Activated CD8-positive, alpha-beta memory T cell treated with anti-CD3 and anti-CD28 coated beads, Interleukin-2, amount 10 ng/mL, durations not matched to agents 7 days and 5 days (primary cell): ENCODE measurements at regions of chr18 and their contacts with region 1.

Region 1: DNA sequence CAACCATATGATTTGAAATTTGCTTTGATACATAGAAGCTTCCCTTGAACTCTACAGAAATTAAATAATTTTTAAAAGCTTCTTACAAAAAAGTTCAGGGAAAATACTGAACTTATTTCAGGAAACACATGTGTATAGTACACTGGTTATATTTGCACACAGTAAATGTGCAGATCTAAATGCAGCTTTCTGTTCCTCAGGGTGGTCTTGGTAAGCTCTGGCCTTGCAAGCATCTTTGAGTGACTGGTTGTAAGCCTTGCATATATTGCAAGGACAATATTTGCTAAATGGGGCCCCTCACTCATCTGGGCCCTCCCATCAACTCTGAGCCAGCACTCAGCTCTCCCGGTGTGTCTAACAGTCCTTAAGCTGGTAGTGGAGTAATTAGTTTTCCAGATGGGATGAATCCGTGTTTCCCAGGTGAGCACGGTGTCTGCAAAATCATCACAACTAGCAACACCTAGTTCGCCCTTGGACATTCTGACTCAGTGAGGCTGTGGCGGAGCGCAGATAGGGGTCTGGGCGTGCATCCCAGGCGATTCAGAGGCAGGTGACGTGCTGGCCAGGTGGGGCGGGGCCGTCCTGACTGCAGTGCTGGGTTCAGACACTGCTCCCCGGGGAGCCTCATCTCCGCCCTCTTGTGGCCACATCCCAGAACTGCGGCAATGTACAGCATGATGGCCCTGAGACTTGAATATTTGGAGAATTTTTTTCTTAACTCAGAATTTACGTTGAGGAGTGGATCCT is 149.6 kb downstream of the MBP start:
- DNase-seq: peak; percentile 93
- ATAC-seq: peak; percentile 97
- H3K4me3 Mint-ChIP-seq: no peak overlapping the region
- H3K27ac Mint-ChIP-seq: no peak overlapping the region
- H3K4me1 Mint-ChIP-seq: peaks cover 6% of the 10 kb centered on the region
- H3K27me3 Mint-ChIP-seq: no peaks in the 10 kb centered on the region

Region 2: GRCh38 chr18:76476665-76477561 is 506.1 kb before region 1 on chr18:
- CTCF ChIA-PET with region 1: no interaction called
- DNase-seq: no peak
- ATAC-seq: no peak
- H3K4me3 Mint-ChIP-seq: no peak overlapping the region
- H3K27ac Mint-ChIP-seq: no peak overlapping the region
- H3K4me1 Mint-ChIP-seq: no peaks in the 10 kb centered on the region
- H3K27me3 Mint-ChIP-seq: peaks cover 39% of the 10 kb centered on the region

Region 3: DNA sequence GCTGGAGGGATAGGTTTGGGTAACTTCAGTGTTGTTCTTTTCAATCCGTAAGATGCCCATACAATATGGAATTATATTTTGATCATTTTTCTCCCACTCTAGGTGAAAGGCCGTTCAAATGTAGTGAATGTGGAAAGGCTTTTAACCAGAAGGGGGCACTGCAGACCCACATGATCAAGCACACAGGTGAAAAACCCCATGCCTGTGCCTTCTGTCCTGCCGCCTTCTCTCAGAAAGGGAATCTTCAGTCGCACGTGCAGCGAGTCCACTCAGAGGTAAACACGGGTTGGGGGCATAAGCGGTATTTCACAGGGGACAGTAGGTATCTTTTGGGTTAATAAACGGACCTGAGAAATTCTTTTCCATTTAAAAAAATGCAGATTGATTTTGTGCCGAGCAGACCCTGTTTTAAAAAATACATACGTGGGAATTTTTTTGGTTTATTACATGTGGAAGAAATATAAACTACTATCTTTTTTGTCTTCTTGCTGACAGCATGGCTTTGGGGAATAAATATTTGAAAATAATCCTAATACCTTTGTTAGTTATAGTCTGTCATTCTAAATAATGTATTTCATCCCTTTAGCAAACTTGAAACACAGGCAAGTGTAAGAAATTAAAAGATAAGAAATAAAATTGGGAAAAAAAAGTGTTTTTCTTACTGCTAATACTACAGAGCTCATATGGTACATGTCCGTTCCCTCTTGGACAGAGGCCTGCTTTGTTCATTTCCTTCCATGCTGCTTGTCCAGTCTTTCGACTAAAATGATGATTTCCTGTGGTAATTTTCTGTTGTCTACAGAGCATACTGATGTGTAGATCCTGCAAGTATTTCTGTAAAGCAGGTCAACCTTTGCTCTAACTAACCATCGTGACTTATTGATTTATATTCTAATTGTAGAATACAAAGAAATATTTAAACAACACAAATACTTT is 107.4 kb before region 1 on chr18:
- CTCF ChIA-PET with region 1: interaction called, 13 read pairs
- DNase-seq: peak; percentile 63
- ATAC-seq: peak; percentile 52
- H3K4me3 Mint-ChIP-seq: no peak overlapping the region
- H3K27ac Mint-ChIP-seq: no peak overlapping the region
- H3K4me1 Mint-ChIP-seq: peaks cover 14% of the 10 kb centered on the region
- H3K27me3 Mint-ChIP-seq: no peaks in the 10 kb centered on the region

Region 4: DNA sequence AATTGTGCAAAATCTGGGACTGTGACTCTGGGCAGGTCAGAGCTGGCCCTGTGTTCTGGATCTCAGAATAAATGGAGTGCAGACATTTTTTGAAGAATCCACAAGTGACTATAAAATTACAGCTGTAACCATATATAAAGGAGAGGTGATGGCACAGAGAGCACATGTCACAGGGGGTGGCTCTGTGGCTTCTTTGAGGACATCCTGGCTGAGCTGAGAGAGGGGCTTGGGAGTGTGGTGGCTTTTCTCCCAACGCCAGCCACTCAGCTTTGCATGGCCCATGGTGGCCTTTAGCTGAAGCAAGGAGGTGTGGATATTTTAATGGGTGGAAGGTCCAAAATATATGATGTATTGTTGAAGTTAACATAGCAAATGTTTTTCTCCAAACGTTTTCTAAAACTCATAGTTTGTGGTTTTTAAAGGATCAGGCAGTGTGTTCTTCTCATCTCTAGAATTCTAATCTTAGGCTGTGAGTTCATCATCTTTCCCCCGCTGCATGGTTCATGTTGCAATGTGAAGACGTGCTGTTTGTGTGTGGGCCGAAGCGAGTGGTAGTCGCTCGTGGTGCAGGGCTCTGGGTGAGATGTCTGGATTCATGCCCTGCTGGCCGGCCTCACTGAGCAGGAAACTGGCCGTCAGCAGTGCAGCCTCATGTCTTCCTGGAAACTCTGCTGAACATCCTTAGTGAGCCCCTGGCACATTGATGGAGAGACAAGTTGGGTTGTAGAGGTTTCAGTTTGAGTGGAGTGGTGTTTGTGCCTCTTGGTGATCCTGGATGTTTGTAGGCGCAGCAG is 50.8 kb before region 1 on chr18:
- CTCF ChIA-PET with region 1: interaction called, 16 read pairs
- DNase-seq: no peak
- ATAC-seq: peak; percentile 64
- H3K4me3 Mint-ChIP-seq: no peak overlapping the region
- H3K27ac Mint-ChIP-seq: peak overlapping the region; percentile 65
- H3K4me1 Mint-ChIP-seq: peaks cover 25% of the 10 kb centered on the region
- H3K27me3 Mint-ChIP-seq: no peaks in the 10 kb centered on the region

Region 5: GRCh38 chr18:76994086-76994654 is 11.2 kb after region 1 on chr18:
- CTCF ChIA-PET with region 1: interaction called, 24 read pairs
- DNase-seq: no peak
- ATAC-seq: no peak
- H3K4me3 Mint-ChIP-seq: no peak overlapping the region
- H3K27ac Mint-ChIP-seq: no peak overlapping the region
- H3K4me1 Mint-ChIP-seq: peaks cover 4% of the 10 kb centered on the region
- H3K27me3 Mint-ChIP-seq: no peaks in the 10 kb centered on the region

Region 6: DNA sequence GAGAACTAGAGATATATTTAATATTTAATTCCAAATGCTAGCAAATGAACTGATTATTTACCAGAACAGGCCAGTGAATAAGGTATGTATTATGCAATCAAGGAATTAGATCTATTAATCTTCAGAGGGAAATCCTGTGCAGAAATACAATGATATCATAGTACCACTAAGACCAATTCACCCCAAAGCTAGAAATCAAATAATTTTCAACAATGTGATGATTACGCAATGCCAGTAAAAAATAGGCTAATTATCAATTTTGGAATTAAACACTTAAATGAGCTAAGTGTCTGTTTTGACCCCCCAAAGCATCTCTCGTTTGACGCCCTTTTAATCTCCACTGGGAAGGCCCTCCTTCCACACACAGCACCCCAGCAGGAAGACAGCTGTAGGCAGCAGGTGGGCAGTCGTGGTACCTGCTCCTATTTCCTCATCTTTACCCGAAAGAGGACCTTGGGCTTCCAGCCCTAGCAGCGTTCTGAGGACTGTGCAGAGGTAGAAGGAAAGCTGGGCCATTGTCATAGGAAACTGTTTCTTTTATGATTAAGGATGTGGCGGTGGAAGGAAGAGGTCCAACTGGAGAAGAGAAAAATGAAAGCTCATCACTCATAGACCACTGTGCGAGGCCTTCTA is 64.9 kb after region 1 on chr18:
- CTCF ChIA-PET with region 1: no interaction called
- DNase-seq: no peak
- ATAC-seq: no peak
- H3K4me3 Mint-ChIP-seq: no peak overlapping the region
- H3K27ac Mint-ChIP-seq: no peak overlapping the region
- H3K4me1 Mint-ChIP-seq: peaks cover 15% of the 10 kb centered on the region
- H3K27me3 Mint-ChIP-seq: no peaks in the 10 kb centered on the region

Region 7: GRCh38 chr18:77207540-77207939 is 224.5 kb after region 1 on chr18:
- CTCF ChIA-PET with region 1: interaction called, 10 read pairs
- DNase-seq: peak; percentile 56
- ATAC-seq: peak; percentile 50
- H3K4me3 Mint-ChIP-seq: no peak overlapping the region
- H3K27ac Mint-ChIP-seq: no peak overlapping the region
- H3K4me1 Mint-ChIP-seq: peaks cover 47% of the 10 kb centered on the region
- H3K27me3 Mint-ChIP-seq: no peaks in the 10 kb centered on the region

Region 8: DNA sequence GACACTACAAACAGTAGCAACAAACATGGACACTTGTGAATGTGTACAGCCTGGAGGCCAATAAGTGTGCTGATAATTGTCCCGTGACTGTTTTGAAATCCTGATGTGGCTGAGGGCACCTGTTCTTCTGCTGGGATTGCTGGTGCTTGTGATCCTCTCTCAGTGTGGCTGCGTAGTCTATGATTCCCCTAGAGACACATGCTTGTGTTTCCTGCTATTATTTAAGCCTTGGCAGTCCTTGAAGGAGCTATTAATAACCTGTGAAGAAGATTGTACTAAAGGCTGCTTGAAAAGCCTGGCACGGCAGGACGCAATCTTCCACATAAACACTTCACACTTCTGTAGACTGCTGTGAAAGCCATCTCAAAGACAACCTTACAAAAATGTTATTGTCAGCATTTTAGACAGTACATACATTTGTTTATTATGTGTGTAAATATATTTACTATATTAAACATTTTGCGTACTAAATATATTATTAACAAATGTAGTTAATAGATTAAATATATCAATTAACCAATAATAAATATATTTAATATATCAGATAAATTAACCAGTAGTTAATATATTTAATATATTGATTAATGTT is 338.1 kb after region 1 on chr18:
- CTCF ChIA-PET with region 1: no interaction called
- DNase-seq: no peak
- ATAC-seq: no peak
- H3K4me3 Mint-ChIP-seq: no peak overlapping the region
- H3K27ac Mint-ChIP-seq: no peak overlapping the region
- H3K4me1 Mint-ChIP-seq: no peaks in the 10 kb centered on the region
- H3K27me3 Mint-ChIP-seq: peaks cover 29% of the 10 kb centered on the region